Activated CD8-positive, alpha-beta memory T cell treated with anti-CD3 and anti-CD28 coated beads, Interleukin-2, amount 10 ng/mL, durations not matched to agents 7 days and 5 days (primary cell): ENCODE measurements at regions of chr5 and their contacts with region 1.

Region 1: GRCh38 chr5:66828548-66829357 is 232.6 kb downstream of the MAST4 start:
- DNase-seq: peak; percentile 91
- ATAC-seq: peak; percentile 94
- H3K4me3 Mint-ChIP-seq: peak overlapping the region; percentile 97
- H3K27ac Mint-ChIP-seq: peak overlapping the region; percentile 92
- H3K4me1 Mint-ChIP-seq: peaks cover 64% of the 10 kb centered on the region
- H3K27me3 Mint-ChIP-seq: peaks cover 3% of the 10 kb centered on the region

Region 2: GRCh38 chr5:66814146-66814991 is 14.4 kb before region 1 on chr5:
- CTCF ChIA-PET with region 1: interaction called, 80 read pairs
- DNase-seq: peak; percentile 76
- ATAC-seq: peak; percentile 85
- H3K4me3 Mint-ChIP-seq: no peak overlapping the region
- H3K27ac Mint-ChIP-seq: no peak overlapping the region
- H3K4me1 Mint-ChIP-seq: peaks cover 34% of the 10 kb centered on the region
- H3K27me3 Mint-ChIP-seq: peaks cover 5% of the 10 kb centered on the region

Region 3: GRCh38 chr5:66840511-66841013 is 11.8 kb after region 1 on chr5:
- CTCF ChIA-PET with region 1: interaction called, 117 read pairs
- DNase-seq: peak; percentile 85
- ATAC-seq: peak; percentile 86
- H3K4me3 Mint-ChIP-seq: peak overlapping the region; percentile 38
- H3K27ac Mint-ChIP-seq: peak overlapping the region; percentile 97
- H3K4me1 Mint-ChIP-seq: peaks cover 67% of the 10 kb centered on the region
- H3K27me3 Mint-ChIP-seq: no peaks in the 10 kb centered on the region